RWPE1 (cell line): ENCODE measurements at regions of chr3 and their contacts with region 1.

Region 1: GRCh38 chr3:15098503-15099363 is at the start of gene RBSN:
- DNase-seq: peak; percentile 87
- H3K27ac ChIP-seq: peak within 1 kb of the TSS; percentile 74
- CTCF ChIP-seq: no peak

Region 2: DNA sequence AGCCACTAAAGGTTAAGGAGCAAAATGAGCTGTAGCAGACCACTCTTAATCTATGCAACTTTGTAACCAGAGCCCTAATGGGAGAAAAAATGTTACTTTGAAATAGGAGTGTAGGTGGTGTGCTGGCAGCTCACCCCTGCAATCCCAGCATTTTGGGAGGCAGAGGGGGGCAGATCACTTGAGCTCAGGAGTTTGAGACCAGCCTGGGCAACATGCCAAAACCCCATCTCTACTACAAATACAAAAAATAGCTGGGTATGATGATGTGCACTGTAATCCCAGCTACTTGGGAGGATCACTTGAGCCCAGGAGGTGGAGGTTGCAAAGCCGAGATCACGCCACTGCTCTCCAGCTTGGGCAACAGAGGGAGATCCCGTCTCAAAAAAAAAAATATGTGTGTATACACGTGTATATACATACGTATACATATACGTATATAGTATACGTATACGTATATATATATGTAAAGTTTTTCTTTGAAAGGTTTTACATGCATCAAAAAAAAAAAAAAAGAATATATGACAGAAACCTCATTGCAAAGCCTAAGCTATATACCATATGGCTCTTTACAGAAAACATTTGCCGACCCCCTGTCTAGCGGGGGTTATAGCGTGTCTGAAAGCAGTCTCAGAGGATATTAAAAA is 123.0 kb after region 1 on chr3:
- CTCF ChIA-PET with region 1: no interaction called
- POLR2A ChIA-PET with region 1: interaction called, 10 read pairs
- DNase-seq: no peak
- H3K27ac ChIP-seq: no peak overlapping the region
- CTCF ChIP-seq: no peak